Aorta (tissue), 5 donors: ENCODE measurements at regions of chr9 and their contacts with region 1.

Region 1: DNA sequence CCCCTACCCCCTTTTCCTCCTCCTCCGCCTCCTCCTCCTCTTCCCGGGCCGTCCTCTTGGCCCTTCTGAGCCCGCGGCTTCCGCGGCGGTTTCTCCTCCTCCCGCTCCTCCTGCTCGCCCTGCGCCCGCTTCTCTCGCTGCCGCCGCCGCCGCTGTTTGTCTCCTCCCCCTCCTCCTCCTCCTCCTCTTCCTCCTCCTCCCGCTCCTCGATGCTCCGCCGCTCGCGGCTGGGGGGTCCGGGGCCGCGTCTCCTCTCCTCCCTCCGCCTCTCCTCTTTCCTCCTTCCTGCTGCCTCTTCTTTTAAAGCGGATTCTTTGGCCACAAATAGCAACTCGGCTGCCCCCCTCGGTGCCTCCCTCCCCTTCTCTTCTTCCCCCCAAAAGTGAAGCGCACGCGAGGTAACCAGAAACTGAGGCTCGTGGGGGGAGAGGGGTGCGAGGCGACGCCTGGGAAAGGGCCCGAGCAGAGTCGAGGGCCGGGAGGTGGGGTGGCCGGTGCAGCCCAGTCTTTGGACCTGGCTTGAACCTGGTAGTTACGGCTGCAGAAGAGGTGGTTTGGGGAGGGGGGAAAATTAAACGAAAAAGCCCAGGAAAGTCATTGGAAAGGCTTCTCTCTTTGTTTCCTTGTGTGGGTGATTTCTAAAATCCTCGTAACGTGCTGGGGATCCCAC is 1058.5 kb upstream of the DMAC1 start:
- DNase-seq: peak; percentile 81 to 91
- ATAC-seq: peak; percentile 90
- H3K4me3 ChIP-seq: peak overlapping the region; percentile 76 to 96
- H3K27ac ChIP-seq: peak overlapping the region in 1 of 2 donors; percentile 6
- H3K4me1 ChIP-seq: no peaks in the 10 kb centered on the region
- H3K27me3 ChIP-seq: no peaks in the 10 kb centered on the region

Region 2: DNA sequence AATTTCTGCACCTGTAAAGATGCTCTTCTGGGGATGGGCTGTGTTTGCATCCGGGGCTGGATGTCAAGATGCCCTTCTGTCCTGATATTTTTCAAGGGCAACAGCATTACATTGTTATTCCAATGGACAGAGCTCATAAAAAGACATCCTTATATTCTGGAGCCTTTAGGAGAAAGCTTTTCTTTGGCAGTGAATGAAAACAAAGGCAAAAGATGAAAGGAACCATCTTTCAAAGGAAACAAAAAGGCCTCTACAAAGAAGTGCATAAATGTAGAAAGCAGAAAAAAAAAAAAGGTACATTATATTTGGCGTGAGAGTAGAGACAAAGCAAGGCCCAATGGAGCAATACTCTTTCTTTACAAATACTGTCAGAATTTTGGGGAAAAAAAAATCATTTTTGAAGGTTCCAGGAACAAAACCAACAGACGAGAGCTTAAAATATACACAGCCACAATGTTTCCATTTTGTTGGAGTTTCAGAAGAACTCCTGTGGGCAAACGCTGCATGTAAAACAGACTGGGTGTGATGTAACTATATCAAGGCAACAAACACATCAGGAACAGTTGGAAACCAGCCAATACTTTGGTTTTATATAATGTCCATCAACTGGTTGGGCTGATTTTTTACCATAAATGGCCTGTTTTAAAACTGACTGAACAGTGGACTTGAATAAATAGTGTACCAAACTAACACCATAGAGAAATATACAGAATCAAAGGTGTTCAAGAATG is 172.9 kb before region 1 on chr9:
- intact Hi-C with region 1: loop called in 1 of 2 experiments (anchors 10 kb)
- DNase-seq: no peak
- ATAC-seq: no peak
- H3K4me3 ChIP-seq: no peak overlapping the region
- H3K27ac ChIP-seq: no peak overlapping the region
- H3K4me1 ChIP-seq: peaks cover 0 to 2% of the 10 kb centered on the region in 2 donors
- H3K27me3 ChIP-seq: no peaks in the 10 kb centered on the region

Region 3: GRCh38 chr9:8733131-8733954 is 124.7 kb before region 1 on chr9:
- intact Hi-C with region 1: loop called in 1 of 2 experiments (anchors 10 kb)
- DNase-seq: peak; percentile 67 to 88
- ATAC-seq: peak; percentile 83
- H3K4me3 ChIP-seq: peak overlapping the region; percentile 43 to 84
- H3K27ac ChIP-seq: no peak overlapping the region
- H3K4me1 ChIP-seq: peaks cover 0 to 6% of the 10 kb centered on the region in 2 donors
- H3K27me3 ChIP-seq: peaks cover 0 to 1% of the 10 kb centered on the region in 2 donors

Region 4: DNA sequence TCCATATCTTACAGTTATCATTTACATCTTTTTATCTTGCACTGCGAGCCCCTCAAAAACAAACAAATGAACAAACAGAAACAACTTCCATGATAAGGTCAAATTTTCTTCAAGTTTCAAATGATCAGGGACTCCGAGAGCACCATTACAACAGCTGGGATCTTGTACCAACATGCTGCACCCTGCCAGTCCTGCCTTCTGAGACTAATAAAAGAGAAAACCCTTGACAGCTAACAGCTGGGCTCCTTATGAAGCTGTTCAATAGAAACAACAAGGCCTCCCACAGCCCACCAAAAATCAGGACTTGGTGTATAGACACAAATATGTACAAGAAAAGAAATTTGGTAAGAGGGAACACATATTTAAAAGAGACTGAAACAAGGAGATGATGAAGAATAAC is 73.2 kb before region 1 on chr9:
- intact Hi-C with region 1: loop called (anchors 5 to 10 kb)
- DNase-seq: no peak
- ATAC-seq: no peak
- H3K4me3 ChIP-seq: peak overlapping the region in 1 of 2 donors; percentile 33
- H3K27ac ChIP-seq: peak overlapping the region; percentile 59 to 72
- H3K4me1 ChIP-seq: peaks cover 3 to 11% of the 10 kb centered on the region in 2 donors
- H3K27me3 ChIP-seq: no peaks in the 10 kb centered on the region

Region 5: DNA sequence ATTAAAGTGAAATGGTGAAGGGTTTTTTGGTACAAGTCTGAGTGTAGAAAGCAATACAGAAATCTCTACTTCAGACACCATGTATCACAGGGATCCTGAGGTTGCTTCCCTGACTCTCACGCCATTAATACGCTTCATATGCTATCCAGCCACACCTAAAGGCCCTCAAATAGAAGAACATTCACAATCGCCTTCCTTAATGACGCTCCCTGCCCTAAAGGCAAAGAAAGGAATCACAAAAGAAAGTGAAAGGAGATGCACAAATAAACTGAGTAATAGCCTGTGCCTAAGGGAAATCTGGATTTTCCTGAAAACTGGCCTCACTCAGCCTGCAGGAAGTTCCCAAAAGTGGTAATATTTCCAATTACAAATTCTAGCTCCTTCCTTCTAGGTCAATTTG is 55.8 kb before region 1 on chr9:
- intact Hi-C with region 1: no loop called
- DNase-seq: no peak
- ATAC-seq: no peak
- H3K4me3 ChIP-seq: no peak overlapping the region
- H3K27ac ChIP-seq: no peak overlapping the region
- H3K4me1 ChIP-seq: no peaks in the 10 kb centered on the region
- H3K27me3 ChIP-seq: no peaks in the 10 kb centered on the region